ENCODE measurements at regions of chr22 and their contacts with region 1.

Region 1: DNA sequence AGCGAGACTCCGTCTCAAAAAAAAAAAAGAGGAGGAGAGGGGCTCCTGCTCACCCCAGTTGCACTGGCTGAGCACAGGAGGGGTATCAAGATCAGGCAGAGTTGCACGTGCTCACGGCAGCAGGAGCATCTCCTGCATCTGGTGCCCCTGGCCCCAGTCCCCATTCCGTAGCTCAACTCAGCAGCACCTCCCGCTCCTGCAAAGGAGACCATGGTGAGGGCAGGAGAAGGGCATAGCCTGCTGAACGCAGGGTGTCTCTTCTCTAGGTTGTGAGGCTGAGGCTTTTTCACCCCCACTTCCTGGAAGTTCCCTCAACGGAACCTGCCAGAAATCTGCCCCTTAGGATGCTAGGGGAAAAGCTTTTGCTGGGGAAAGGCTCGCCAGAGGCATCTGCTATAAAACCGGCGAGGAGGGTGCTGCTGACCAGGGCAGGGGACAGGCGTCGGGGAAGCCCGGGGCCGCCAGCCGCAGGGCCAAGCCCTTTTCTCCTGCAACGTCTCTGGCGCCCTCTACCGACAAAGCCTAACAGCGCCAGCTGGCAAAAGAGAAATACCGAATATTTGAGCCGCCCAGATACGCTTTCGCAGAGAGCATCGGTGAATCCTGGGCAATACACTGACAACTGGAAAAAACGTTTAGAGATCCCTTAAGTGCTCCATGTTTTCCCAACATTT is 1.0 kb upstream of the PPP6R2 start:
- DNase-seq: peak; percentile 81
- H3K4me3 ChIP-seq: peak overlapping the region; percentile 38 to 71 (median 71)
- H3K27ac ChIP-seq: peak overlapping the region; percentile 30
- H3K4me1 ChIP-seq: peaks cover 5% of the 10 kb centered on the region
- H3K27me3 ChIP-seq: no peaks in the 10 kb centered on the region
- CTCF ChIP-seq: peak; percentile 93 to 94
- POLR2A ChIP-seq: no peak

Region 2: GRCh38 chr22:50244420-50245213 is 97.5 kb before region 1 on chr22 and contains the start of gene TUBGCP6:
- CTCF ChIA-PET with region 1: interaction called, 60 read pairs
- POLR2A ChIA-PET with region 1: no interaction called
- dilution Hi-C with region 1: no loop called
- intact Hi-C with region 1: loop called (anchors 1 kb)
- DNase-seq: peak; percentile 88
- H3K4me3 ChIP-seq: peak within 1 kb of the TSS; percentile 55 to 98 (median 90)
- H3K27ac ChIP-seq: peak within 1 kb of the TSS; percentile 73
- H3K4me1 ChIP-seq: peaks cover 26% of the 10 kb centered on the region
- H3K27me3 ChIP-seq: no peaks in the 10 kb centered on the region
- CTCF ChIP-seq: no peak
- POLR2A ChIP-seq: peak; percentile 83
- total RNA-seq, gene TUBGCP6: 41.5 and 45.3 TPM in 2 replicates

Region 3: GRCh38 chr22:50270666-50271394 is 71.3 kb before region 1 on chr22:
- CTCF ChIA-PET with region 1: interaction called, 10 read pairs
- POLR2A ChIA-PET with region 1: no interaction called
- dilution Hi-C with region 1: no loop called
- intact Hi-C with region 1: loop called (anchors 1 kb)
- DNase-seq: peak; percentile 61
- H3K4me3 ChIP-seq: peak overlapping the region; percentile 30 to 59 (median 42)
- H3K27ac ChIP-seq: no peak overlapping the region
- H3K4me1 ChIP-seq: peaks cover 12% of the 10 kb centered on the region
- H3K27me3 ChIP-seq: no peaks in the 10 kb centered on the region
- CTCF ChIP-seq: no peak
- POLR2A ChIP-seq: no peak

Region 4: GRCh38 chr22:50293441-50294318 is 48.4 kb before region 1 on chr22:
- CTCF ChIA-PET with region 1: interaction called, 17 read pairs
- POLR2A ChIA-PET with region 1: interaction called, 3 read pairs
- dilution Hi-C with region 1: no loop called
- intact Hi-C with region 1: loop called (anchors 5 kb)
- DNase-seq: peak; percentile 83
- H3K4me3 ChIP-seq: peak overlapping the region in 2 of 3 experiments; percentile 6 to 22
- H3K27ac ChIP-seq: peak overlapping the region; percentile 92
- H3K4me1 ChIP-seq: peaks cover 20% of the 10 kb centered on the region
- H3K27me3 ChIP-seq: no peaks in the 10 kb centered on the region
- CTCF ChIP-seq: peak in 1 of 2 donors; percentile 1
- POLR2A ChIP-seq: peak; percentile 9

Region 5: DNA sequence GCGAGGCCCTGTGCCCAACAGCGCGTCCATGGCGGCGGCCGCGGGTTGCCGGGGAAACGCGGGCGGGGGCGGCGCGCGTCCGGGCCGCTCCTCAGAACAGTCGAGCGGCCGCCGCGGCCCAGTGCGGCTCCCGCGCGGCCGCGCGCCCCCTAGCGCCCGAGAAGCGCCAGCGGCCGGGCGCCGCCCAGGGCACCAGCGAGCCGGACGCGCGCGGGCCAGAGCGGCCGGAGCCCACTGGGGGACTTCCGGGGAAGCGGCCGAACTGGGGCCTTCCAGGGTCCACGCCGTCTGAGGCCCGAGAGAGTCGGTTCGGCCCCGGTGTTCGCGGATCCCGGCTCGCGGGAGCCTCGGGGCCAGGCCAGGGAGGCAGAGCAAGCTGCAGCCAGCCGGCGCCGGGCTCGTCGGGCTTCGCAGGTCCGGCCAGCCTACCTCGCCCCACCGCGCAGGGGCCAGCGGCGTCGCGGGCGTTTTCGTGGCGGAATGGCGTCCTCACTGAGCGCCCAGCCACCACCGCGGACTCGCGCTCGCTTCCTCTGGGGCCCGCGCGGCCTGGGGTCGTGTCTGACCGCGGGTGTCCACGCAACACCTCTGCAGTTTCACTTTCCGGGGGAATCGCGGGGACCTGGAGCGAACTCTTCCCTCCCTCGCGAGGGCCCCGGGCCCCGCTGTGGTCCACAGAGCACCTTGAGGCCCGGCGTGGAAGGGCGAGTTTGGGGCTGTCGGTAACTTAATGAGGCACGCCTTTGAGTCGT is 15.0 kb before region 1 on chr22 and contains the start of gene DENND6B:
- CTCF ChIA-PET with region 1: interaction called, 4 read pairs
- POLR2A ChIA-PET with region 1: no interaction called
- dilution Hi-C with region 1: no loop called
- intact Hi-C with region 1: loop called (anchors 2 kb)
- DNase-seq: peak; percentile 64
- H3K4me3 ChIP-seq: peak within 1 kb of the TSS; percentile 16 to 58 (median 56)
- H3K27ac ChIP-seq: peak within 1 kb of the TSS; percentile 70
- H3K4me1 ChIP-seq: peaks cover 9% of the 10 kb centered on the region
- H3K27me3 ChIP-seq: no peaks in the 10 kb centered on the region
- CTCF ChIP-seq: peak; percentile 33 to 68
- POLR2A ChIP-seq: peak; percentile 89
- total RNA-seq, gene DENND6B: 2.9 and 5.9 TPM in 2 replicates

Measured in endothelial cell of umbilical vein (primary cell).